Aorta (tissue), 5 donors: ENCODE measurements at regions of chr7 and their contacts with region 1.

Region 1: GRCh38 chr7:105013221-105013815 is 687 bp upstream of the KMT2E start:
- DNase-seq: peak; percentile 97
- ATAC-seq: peak; percentile 92
- H3K4me3 ChIP-seq: peak overlapping the region; percentile 19 to 91
- H3K27ac ChIP-seq: peak overlapping the region; percentile 96 to 99
- H3K4me1 ChIP-seq: no peaks in the 10 kb centered on the region
- H3K27me3 ChIP-seq: no peaks in the 10 kb centered on the region

Region 2: DNA sequence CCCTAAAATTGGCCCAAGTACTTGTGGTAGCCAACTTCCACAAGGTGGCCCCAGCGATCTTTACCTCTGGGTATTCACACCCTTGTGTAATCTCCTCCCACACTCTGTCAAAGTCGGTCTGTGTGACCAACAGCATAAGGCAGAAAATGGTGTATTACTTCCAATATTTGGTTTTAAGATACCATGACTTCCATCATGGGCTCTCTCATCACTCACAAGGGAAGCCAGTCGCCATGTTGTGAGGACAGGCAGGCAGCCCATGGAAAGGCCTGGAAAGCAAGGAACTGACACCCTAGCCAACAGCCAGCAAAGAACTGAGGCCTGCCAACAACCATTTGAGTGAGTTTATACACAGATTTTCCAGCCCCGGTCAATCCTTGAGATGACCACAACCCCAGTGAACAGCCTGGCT is 90.3 kb before region 1 on chr7:
- intact Hi-C with region 1: no loop called
- DNase-seq: peak; percentile 82 to 85
- ATAC-seq: peak; percentile 90
- H3K4me3 ChIP-seq: no peak overlapping the region
- H3K27ac ChIP-seq: peak overlapping the region in 1 of 2 donors; percentile 52
- H3K4me1 ChIP-seq: no peaks in the 10 kb centered on the region
- H3K27me3 ChIP-seq: no peaks in the 10 kb centered on the region

Region 3: GRCh38 chr7:105060437-105060836 is 47.1 kb after region 1 on chr7:
- intact Hi-C with region 1: loop called in 1 of 2 experiments (anchors 5 kb)
- DNase-seq: no peak
- ATAC-seq: no peak
- H3K4me3 ChIP-seq: no peak overlapping the region
- H3K27ac ChIP-seq: no peak overlapping the region
- H3K4me1 ChIP-seq: peaks cover 1 to 12% of the 10 kb centered on the region in 2 donors
- H3K27me3 ChIP-seq: no peaks in the 10 kb centered on the region